ENCODE measurements at regions of chr3 and their contacts with region 1.

Region 1: DNA sequence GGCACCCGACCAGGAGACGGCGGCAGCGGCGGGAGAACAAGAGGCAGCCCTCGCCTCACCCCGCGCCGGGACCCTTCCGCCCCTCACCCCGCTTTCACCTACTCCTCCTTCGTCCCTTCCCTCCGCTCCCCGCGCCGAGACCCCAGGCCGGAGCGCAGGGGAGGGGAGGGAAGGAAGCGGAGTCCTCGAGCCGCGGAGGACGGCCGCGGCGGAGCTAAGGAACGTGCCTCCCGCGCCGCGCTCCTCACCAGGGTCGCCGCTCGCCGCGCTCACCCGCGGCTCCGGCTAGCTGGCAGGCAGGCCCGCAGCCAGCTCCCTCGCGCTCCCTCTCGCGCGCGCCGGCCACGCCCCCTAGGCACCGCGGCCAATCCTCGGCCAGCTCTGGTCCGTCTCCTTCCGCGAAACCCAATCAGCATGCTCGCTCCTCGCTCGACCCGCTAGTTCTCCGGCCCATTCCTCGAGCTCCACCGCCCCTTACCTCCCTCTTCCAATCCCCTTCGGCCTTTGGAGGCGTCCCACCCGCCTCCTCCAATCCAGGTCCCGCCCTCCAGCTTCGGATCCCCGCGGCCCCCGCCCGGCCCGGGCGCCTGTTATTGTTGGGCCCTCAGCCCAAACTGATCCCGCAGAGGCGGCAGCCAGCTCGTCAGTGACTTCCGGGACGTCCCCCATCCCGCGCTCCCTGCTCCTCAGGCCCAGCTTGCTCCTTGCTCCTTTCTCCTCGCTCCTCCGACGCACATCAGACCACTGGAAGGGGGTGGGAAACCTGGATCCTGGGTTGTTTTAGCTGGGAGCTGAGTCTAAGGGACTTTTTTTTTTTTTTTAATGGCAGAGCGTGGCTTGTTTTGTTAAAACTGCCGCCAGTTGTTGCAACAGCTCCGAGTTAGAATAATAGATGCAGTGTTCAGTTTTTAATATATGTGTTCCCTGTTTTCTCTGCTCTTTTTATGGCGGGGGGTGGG is at the start of gene DCBLD2:
- DNase-seq: peak; percentile 98
- H3K4me3 ChIP-seq: peak within 1 kb of the TSS; percentile 90
- H3K27ac ChIP-seq: peak within 1 kb of the TSS; percentile 33
- H3K4me1 ChIP-seq: peaks cover 21% of the 10 kb centered on the region
- CTCF ChIP-seq: no peak
- total RNA-seq, gene DCBLD2: 9.2 and 12.0 TPM in 2 replicates

Region 2: DNA sequence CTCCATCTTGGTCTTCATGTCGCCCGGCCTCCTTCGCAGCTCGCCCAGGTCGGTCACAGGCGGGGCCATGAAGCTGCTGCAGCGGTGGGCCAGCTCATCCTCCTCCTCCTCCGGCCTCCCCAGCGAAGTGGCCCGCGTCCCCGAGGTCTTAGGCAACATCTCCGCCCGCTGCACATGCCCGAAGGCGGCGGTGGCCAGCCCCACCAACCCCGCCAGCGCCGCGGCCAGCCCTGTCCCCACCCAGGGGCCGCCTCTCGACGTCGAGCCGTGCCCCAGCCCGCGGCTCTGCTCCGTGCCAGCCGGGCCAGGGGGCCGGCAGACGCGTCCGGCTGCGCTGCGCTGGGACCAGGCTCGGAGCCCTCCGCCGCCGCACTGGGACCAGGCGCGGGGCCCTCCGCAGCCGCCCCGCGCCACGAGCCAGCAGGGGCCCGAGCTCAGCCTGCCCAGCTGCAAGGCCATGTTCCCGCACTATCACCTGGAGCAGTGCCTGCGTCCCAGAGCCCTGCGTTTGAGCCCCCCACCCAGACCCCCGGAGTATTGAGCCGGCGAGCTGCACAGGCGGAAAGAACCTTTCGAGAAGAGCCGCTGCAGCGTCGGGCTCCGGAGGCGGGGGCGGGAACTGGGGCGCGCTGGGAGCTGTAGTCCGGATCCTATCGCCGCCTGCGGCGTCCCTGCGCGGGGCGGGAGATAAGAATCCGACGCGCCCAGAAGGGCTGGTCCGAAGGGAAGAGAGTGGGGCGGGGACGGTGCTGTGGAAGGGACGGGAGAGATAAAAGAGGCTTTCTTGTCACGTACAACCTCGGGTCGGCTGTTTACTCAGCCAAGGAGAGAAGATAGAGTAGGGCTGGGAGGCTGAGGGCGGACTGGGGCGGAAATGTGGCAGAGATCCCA is 308.4 kb before region 1 on chr3 and contains the start of gene CPOX:
- CTCF ChIA-PET with region 1: no interaction called
- POLR2A ChIA-PET with region 1: no interaction called
- intact Hi-C with region 1: loop called (anchors 10 kb)
- DNase-seq: peak; percentile 76
- H3K4me3 ChIP-seq: peak within 1 kb of the TSS; percentile 76
- H3K27ac ChIP-seq: no peak within 1 kb of the TSS
- H3K4me1 ChIP-seq: peaks cover 10% of the 10 kb centered on the region
- CTCF ChIP-seq: no peak
- total RNA-seq, gene CPOX: 14.7 and 16.4 TPM in 2 replicates

Region 3: DNA sequence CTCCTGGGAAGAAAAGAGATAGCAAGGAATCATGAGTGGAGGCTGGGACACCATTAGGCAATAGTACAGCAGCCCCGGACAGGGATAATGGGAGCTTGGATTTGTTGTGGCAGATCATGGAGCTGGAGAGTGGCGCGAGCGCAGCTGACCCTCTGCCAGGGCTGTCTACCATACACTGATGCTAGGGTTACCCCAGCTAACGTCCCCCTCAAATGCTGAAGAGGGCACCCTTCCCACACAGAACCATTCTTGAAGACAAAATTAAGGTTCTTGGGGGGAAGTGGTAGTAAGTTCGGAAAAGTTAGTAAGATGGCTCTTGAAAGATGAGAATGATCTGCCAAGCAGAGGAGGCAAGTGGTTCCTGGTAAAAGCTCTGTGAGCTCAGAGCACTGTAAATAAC is 77.4 kb before region 1 on chr3:
- CTCF ChIA-PET with region 1: no interaction called
- POLR2A ChIA-PET with region 1: interaction called, 4 read pairs
- intact Hi-C with region 1: loop called (anchors 5 kb)
- DNase-seq: no peak
- H3K4me3 ChIP-seq: no peak overlapping the region
- H3K27ac ChIP-seq: no peak overlapping the region
- H3K4me1 ChIP-seq: no peaks in the 10 kb centered on the region
- CTCF ChIP-seq: 0 out of 2 replicates have a peak, but pooled peaks have one; percentile 30

Region 4: DNA sequence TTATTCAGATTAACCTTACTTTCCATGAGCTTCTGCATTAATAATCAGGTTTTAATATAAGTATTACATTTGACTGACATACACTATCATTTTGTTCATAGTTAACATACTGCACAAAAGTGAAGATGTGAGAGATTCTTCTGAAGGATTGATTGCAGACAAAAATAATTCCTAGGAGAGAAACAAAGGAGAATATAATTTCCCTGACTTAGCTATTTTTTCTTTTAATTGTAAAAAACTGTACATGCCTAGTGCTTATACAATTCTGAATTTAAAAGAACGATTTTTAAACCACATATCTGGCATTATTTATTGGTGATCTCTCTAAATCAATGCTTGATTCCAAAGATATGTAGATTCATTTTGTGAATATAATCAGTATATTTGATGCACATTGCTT is 10.8 kb after region 1 on chr3:
- CTCF ChIA-PET with region 1: no interaction called
- POLR2A ChIA-PET with region 1: interaction called, 12 read pairs
- intact Hi-C with region 1: no loop called
- DNase-seq: no peak
- H3K4me3 ChIP-seq: no peak overlapping the region
- H3K27ac ChIP-seq: no peak overlapping the region
- H3K4me1 ChIP-seq: no peaks in the 10 kb centered on the region
- CTCF ChIP-seq: no peak

Region 5: DNA sequence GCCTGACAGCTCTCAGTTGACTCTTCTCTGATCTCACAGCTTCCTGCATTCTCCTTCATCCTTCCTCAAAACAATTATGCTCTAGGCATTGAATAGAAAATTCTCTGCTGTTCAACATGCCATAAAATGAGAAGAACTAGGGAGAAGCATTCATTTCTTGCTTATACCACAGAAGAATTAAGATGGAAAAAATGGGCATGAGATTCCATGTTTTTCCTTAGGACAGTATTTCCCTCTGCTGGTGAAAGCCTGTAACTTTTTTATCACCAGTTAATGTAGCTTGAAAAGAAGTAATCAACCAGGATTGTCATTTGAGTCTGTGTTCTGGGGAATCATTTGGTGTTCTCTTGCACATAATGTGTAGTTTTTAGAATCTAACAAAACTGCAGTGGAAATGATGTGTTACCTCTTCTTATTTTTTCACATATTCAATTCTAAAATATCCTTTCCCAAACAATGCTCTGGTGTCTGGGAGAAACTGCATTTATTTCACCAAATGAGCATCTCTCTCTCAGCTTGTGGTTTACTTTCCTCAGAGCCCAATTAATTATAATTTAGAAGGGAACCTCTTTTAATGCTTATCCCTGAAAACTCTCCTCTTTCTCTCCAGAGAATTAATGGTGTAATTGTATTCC is 92.6 kb after region 1 on chr3:
- CTCF ChIA-PET with region 1: no interaction called
- POLR2A ChIA-PET with region 1: interaction called, 11 read pairs
- intact Hi-C with region 1: no loop called
- DNase-seq: no peak
- H3K4me3 ChIP-seq: no peak overlapping the region
- H3K27ac ChIP-seq: no peak overlapping the region
- H3K4me1 ChIP-seq: peaks cover 19% of the 10 kb centered on the region
- CTCF ChIP-seq: peak; percentile 69

Region 6: DNA sequence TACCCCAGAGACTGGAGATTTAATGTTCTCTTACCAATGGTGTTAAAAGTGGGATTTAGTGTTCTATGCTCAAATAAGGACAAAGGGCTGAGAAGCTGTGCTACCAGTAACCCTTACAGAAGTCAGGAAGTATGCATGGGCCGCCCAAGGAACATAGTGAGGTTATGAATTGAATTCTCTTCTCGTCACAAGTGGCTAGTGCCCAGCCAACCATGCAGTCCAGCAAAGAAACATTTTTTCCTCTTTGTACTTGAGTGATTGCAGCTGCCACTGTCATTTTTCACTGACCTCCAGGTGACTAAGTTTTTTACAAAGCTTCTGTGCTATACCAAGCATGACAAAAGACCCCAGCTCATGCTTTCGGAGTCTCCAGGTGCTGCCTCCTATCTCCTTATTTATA is 110.4 kb after region 1 on chr3:
- CTCF ChIA-PET with region 1: no interaction called
- POLR2A ChIA-PET with region 1: interaction called, 9 read pairs
- intact Hi-C with region 1: loop called (anchors 5 kb)
- DNase-seq: peak; percentile 96
- H3K4me3 ChIP-seq: peak overlapping the region; percentile 54
- H3K27ac ChIP-seq: peak overlapping the region; percentile 96
- H3K4me1 ChIP-seq: peaks cover 71% of the 10 kb centered on the region
- CTCF ChIP-seq: no peak; the same call in 1 of the 2 replicates